Calu3 (cell line): ENCODE measurements at regions of chr1 and their contacts with region 1.

Region 1: GRCh38 chr1:179447489-179447888 is 81.7 kb downstream of the AXDND1 start:
- DNase-seq: peak; percentile 59
- H3K4me3 Mint-ChIP-seq: no peak overlapping the region
- H3K27ac Mint-ChIP-seq: peak overlapping the region; percentile 25
- H3K4me1 Mint-ChIP-seq: no peaks in the 10 kb centered on the region
- H3K27me3 Mint-ChIP-seq: no peaks in the 10 kb centered on the region
- CTCF ChIP-seq: peak; percentile 59

Region 2: GRCh38 chr1:179425186-179425585 is 22.3 kb before region 1 on chr1:
- CTCF ChIA-PET with region 1: no interaction called
- intact Hi-C with region 1: loop called (anchors 2 kb)
- DNase-seq: no peak
- H3K4me3 Mint-ChIP-seq: no peak overlapping the region
- H3K27ac Mint-ChIP-seq: no peak overlapping the region
- H3K4me1 Mint-ChIP-seq: no peaks in the 10 kb centered on the region
- H3K27me3 Mint-ChIP-seq: no peaks in the 10 kb centered on the region
- CTCF ChIP-seq: no peak